Heart left ventricle (tissue), 16 donors: ENCODE measurements at regions of chr3 and their contacts with region 1.

Region 1: DNA sequence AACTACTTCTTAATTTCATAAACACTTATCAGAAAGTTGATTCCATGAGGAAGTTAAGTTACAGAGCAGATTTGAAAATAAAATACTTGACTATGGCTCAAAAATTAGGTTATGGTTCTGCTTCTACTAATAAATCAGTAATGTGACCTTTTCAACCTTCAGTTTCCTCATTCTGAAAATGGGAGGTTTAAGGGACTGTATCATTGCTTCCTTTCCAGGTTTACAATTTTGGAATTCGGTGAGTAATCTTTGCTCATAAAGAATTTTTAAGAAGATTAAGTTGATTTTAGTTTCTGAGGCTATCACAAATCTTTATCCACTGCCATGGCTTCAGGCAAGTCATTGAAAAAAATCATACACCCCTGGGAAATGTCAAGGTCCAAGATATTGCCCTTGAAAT is 1061.2 kb downstream of the DIPK2A start:
- DNase-seq: no peak
- ATAC-seq: no peak
- H3K4me3 ChIP-seq: no peak overlapping the region
- H3K27ac ChIP-seq: no peak overlapping the region
- H3K4me1 ChIP-seq: no peaks in the 10 kb centered on the region
- H3K27me3 ChIP-seq: no peaks in the 10 kb centered on the region
- CTCF ChIP-seq: no peak
- POLR2A ChIP-seq: no peak

Region 2: GRCh38 chr3:145022447-145022846 is 10.3 kb before region 1 on chr3:
- intact Hi-C with region 1: loop called in 1 of 10 experiments (anchors 1 kb)
- DNase-seq: no peak
- ATAC-seq: no peak
- H3K4me3 ChIP-seq: no peak overlapping the region
- H3K27ac ChIP-seq: no peak overlapping the region
- H3K4me1 ChIP-seq: no peaks in the 10 kb centered on the region
- H3K27me3 ChIP-seq: no peaks in the 10 kb centered on the region
- CTCF ChIP-seq: no peak
- POLR2A ChIP-seq: no peak